ENCODE measurements at regions of chr3 and their contacts with region 1.

Region 1: DNA sequence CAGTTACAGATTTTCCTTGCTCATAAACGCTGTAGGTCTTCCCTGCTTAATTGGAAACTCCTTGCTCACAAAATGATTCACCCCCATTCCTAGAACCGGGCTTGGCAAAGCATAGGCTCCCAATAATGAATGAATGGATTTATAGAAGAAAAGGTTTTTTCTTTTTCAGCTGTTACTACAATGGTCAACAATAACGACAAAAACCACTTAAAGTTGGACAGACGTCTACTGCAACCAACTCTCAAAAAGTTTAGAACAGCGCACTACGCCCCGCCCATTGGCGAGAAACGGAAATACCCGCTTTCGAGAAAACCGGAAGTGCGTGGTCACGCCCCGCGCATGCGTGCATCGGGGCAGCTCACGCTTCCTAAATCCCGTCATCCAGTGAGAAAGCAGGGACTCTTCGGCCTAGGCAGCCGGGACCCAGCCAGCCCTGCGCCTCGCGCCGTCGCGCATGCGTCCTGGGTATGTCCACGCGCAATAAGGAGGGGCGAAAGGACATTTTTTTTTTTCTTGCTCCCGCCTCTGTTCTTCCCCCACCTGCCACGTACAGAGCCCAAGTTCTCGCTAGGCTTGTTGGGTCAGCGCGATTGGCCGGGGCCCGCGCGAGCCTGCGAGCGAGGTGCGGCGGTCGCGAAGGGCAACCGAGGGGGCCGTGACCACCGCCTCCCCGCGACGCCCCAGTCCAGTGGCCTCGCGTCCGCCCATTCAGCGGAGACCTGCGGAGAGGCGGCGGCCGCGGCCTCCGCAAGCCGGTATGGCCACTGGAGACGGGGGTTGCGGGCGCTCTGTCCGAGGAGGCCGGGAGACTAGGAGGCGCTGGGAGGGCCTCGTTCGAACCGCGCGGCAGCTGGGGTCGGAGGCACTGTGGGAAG is at the start of gene TFG:
- DNase-seq: peak; percentile 98
- H3K4me3 Mint-ChIP-seq: peak within 1 kb of the TSS; percentile 84
- H3K27ac Mint-ChIP-seq: peak within 1 kb of the TSS; percentile 90
- H3K4me1 Mint-ChIP-seq: peaks cover 33% of the 10 kb centered on the region
- H3K27me3 Mint-ChIP-seq: no peaks in the 10 kb centered on the region
- total RNA-seq, gene TFG: 73.0 and 75.3 TPM in 2 replicates

Region 2: GRCh38 chr3:100260685-100261484 is 448.3 kb before region 1 on chr3 and contains the start of gene TBC1D23:
- intact Hi-C with region 1: loop called (anchors 1 kb)
- DNase-seq: peak; percentile 97
- H3K4me3 Mint-ChIP-seq: peak within 1 kb of the TSS; percentile 92
- H3K27ac Mint-ChIP-seq: peak within 1 kb of the TSS; percentile 97
- H3K4me1 Mint-ChIP-seq: peaks cover 38% of the 10 kb centered on the region
- H3K27me3 Mint-ChIP-seq: no peaks in the 10 kb centered on the region
- total RNA-seq, gene TBC1D23: 18.3 and 19.0 TPM in 2 replicates

Region 3: GRCh38 chr3:100400780-100401673 is 308.2 kb before region 1 on chr3 and contains the starts of genes LNP1 and TOMM70:
- intact Hi-C with region 1: loop called (anchors 1 kb)
- DNase-seq: peak; percentile 91
- H3K4me3 Mint-ChIP-seq: peak within 1 kb of the TSS; percentile 96
- H3K27ac Mint-ChIP-seq: peak within 1 kb of the TSS; percentile 99
- H3K4me1 Mint-ChIP-seq: peaks cover 60% of the 10 kb centered on the region
- H3K27me3 Mint-ChIP-seq: peaks cover 2% of the 10 kb centered on the region
- total RNA-seq, gene LNP1: 2.4 and 2.6 TPM in 2 replicates
- total RNA-seq, gene TOMM70: 60.0 and 62.9 TPM in 2 replicates

Region 4: GRCh38 chr3:100603469-100603868 is 105.7 kb before region 1 on chr3:
- intact Hi-C with region 1: loop called (anchors 1 kb)
- DNase-seq: no peak
- H3K4me3 Mint-ChIP-seq: peak overlapping the region; percentile 64
- H3K27ac Mint-ChIP-seq: peak overlapping the region; percentile 64
- H3K4me1 Mint-ChIP-seq: peaks cover 28% of the 10 kb centered on the region
- H3K27me3 Mint-ChIP-seq: peaks cover 7% of the 10 kb centered on the region

Region 5: DNA sequence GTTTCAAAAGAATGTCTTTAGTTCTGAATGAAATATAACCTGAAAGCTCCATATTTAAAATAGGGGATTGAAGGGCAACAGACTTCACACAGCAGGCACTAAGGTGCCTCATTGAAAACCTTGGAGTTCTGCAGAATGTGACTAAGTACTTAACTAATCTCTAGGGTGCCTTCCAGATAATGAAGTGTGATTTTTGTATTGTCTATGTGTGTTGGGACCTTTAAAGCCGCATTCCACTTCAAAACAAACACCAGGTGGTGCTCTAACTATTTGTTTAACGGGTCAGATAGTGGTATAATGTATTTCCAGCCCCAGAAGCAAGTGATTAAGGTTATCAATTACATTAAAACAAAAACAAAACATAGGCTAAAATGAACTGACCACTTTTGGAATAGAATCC is 28.1 kb after region 1 on chr3:
- intact Hi-C with region 1: loop called (anchors 1 kb)
- DNase-seq: no peak
- H3K4me3 Mint-ChIP-seq: no peak overlapping the region
- H3K27ac Mint-ChIP-seq: no peak overlapping the region
- H3K4me1 Mint-ChIP-seq: peaks cover 32% of the 10 kb centered on the region
- H3K27me3 Mint-ChIP-seq: no peaks in the 10 kb centered on the region

Region 6: DNA sequence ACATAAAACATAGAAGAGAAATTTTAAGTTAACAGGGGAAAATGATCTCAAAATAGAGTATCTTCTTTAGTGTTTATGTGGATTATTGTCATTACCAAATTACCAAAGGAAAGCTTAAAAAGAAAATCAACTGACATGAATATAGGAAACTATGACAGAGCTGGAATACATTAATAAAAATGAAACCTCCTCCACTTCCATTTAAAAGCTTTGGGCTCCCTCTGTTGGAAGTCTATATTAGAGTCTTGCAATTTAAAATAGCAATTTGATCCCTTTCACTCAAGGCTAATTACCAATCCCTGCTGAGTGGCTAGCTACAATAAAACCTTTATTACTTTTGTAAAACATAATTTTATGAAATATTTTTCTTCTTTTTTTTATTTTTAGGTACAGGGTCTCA is 672.6 kb after region 1 on chr3:
- intact Hi-C with region 1: no loop called
- DNase-seq: no peak
- H3K4me3 Mint-ChIP-seq: no peak overlapping the region
- H3K27ac Mint-ChIP-seq: no peak overlapping the region
- H3K4me1 Mint-ChIP-seq: peaks cover 36% of the 10 kb centered on the region
- H3K27me3 Mint-ChIP-seq: peaks cover 2% of the 10 kb centered on the region

Region 7: GRCh38 chr3:101561630-101562328 is 852.6 kb after region 1 on chr3 and contains the start of gene TRMT10C:
- intact Hi-C with region 1: loop called (anchors 1 kb)
- DNase-seq: peak; percentile 89
- H3K4me3 Mint-ChIP-seq: peak within 1 kb of the TSS; percentile 99
- H3K27ac Mint-ChIP-seq: peak within 1 kb of the TSS; percentile 98
- H3K4me1 Mint-ChIP-seq: peaks cover 34% of the 10 kb centered on the region
- H3K27me3 Mint-ChIP-seq: peaks cover 4% of the 10 kb centered on the region
- total RNA-seq, gene TRMT10C: 59.9 and 60.5 TPM in 2 replicates

Measured in activated T-helper 1 cell treated with anti-CD3 and anti-CD28 coated beads, Interleukin-12 subunit alpha, Interleukin-12 subunit beta, Interleukin-2, Interleukin-4 antibody, amounts not matched to agents 30 ng/mL and 10 ng/mL and 1 ng/mL, durations not matched to agents 14 hours and 24 hours and 36 hours (primary cell).